ENCODE measurements at regions of chr18 and their contacts with region 1.

Region 1: GRCh38 chr18:715626-716025 is 3.2 kb upstream of the ENOSF1 start:
- DNase-seq: no peak
- H3K4me3 ChIP-seq: no peak overlapping the region
- H3K27ac ChIP-seq: no peak overlapping the region
- H3K4me1 ChIP-seq: peaks cover 0 to 8% (median 6%) of the 10 kb centered on the region in 4 donors
- H3K27me3 ChIP-seq: no peaks in the 10 kb centered on the region
- CTCF ChIP-seq: no peak
- EP300 ChIP-seq: no peak
- POLR2A ChIP-seq: no peak

Region 2: DNA sequence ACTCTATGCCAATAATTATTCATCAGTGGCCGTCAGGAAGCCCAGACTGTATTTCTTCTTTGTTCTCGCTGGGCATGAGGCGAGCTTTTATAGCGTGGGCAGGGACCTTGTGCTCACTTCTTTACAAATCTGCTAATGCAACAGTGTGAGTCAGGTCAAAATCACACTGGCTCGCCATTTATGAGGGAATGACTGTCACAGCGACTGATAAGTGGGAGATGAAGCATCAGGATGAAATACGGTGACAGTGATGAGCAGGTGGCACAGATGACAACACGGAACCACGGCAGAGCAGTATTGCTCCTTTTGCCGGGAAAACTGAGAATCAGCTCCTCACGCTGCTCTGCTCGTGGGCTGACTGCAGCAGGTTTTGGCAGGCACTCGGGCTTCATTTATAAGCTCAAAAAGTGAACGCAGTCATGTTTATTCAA is 37.7 kb before region 1 on chr18:
- in situ Hi-C with region 1: no loop called
- intact Hi-C with region 1: loop called (anchors 1 kb)
- DNase-seq: no peak
- H3K4me3 ChIP-seq: no peak overlapping the region
- H3K27ac ChIP-seq: no peak overlapping the region
- H3K4me1 ChIP-seq: peaks cover 0 to 3% (median 0%) of the 10 kb centered on the region in 4 donors
- H3K27me3 ChIP-seq: no peaks in the 10 kb centered on the region
- CTCF ChIP-seq: no peak
- EP300 ChIP-seq: no peak
- POLR2A ChIP-seq: no peak

Region 3: DNA sequence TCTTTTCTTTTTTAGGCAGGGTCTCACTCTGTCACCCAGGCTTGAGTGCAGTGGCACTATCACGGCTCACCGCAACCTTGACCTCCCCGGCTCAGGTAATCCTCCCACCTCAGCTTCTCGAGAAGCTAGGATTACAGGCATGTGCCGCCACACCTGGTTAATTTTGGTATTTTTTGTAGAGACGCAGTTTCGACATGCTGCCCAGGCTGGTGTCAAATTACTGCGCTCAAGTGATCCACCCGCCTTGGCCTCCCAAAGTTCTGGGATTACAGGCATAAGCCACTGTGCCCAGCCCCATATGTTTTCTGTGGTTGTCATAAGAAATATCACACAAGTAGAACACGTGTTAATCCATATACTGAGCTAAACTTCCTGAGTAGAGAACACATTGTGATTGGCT is 17.8 kb before region 1 on chr18:
- in situ Hi-C with region 1: no loop called
- intact Hi-C with region 1: no loop called
- DNase-seq: no peak
- H3K4me3 ChIP-seq: no peak overlapping the region
- H3K27ac ChIP-seq: no peak overlapping the region
- H3K4me1 ChIP-seq: peaks cover 0 to 10% (median 0%) of the 10 kb centered on the region in 4 donors
- H3K27me3 ChIP-seq: no peaks in the 10 kb centered on the region
- CTCF ChIP-seq: no peak
- EP300 ChIP-seq: no peak
- POLR2A ChIP-seq: no peak

Region 4: GRCh38 chr18:778194-778927 is 62.7 kb after region 1 on chr18:
- in situ Hi-C with region 1: no loop called
- intact Hi-C with region 1: no loop called
- DNase-seq: no peak
- H3K4me3 ChIP-seq: peak overlapping the region in 1 of 4 donors; percentile 16
- H3K27ac ChIP-seq: peak overlapping the region; percentile 23 to 74 (median 43)
- H3K4me1 ChIP-seq: peaks cover 0 to 41% (median 17%) of the 10 kb centered on the region in 4 donors
- H3K27me3 ChIP-seq: no peaks in the 10 kb centered on the region
- CTCF ChIP-seq: no peak
- EP300 ChIP-seq: no peak
- POLR2A ChIP-seq: no peak